AG04449 (cell line): ENCODE measurements at regions of chr2 and their contacts with region 1.

Region 1: DNA sequence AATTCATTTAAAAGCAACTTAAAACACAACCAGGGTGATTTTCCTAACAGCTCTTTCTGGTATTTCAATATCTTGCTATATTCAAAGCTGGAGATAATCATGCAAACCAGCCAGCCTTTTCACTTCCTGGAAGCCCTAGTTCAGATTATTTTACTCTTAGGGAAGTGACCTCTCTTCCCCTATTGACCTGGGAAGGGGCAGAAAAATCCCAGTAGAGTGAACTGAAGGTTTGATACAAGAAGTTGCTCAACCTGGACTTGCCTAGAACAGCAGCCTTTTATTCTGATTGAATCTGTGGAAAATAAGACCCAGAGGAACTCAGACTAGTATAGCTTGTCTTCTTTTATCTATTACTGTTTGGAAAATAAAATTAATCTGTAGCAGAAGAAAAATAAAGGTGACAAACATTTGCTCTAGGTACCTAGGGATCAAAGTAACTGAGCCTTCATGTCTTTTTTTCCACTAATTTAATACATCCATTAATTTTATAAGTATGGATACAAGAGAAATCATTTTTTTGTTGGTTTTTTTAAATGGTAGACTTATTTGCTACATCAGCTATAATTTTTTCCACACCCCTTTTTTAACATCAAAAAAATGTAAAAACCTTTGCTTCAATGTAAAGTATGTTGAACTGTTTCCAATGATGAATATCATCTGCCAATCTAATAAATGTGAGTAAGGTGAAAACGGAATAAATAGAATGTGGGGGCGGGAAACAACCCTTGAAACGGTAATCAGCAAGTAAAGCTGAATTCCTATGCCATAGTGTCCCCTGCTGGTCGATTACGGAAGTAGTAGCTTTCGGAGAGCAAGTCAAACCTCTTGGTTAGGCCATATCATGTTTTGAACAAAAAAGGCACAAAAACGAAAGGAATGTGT is 629.9 kb downstream of the NRXN1 start:
- DNase-seq: peak; percentile 7
- H3K4me3 ChIP-seq: no peak overlapping the region
- CTCF ChIP-seq: peak; percentile 74

Region 2: GRCh38 chr2:48600204-48600813 is 1801.7 kb before region 1 on chr2:
- CTCF ChIA-PET with region 1: interaction called, 15 read pairs
- POLR2A ChIA-PET with region 1: no interaction called
- DNase-seq: no peak
- H3K4me3 ChIP-seq: no peak overlapping the region
- CTCF ChIP-seq: peak; percentile 58

Region 3: DNA sequence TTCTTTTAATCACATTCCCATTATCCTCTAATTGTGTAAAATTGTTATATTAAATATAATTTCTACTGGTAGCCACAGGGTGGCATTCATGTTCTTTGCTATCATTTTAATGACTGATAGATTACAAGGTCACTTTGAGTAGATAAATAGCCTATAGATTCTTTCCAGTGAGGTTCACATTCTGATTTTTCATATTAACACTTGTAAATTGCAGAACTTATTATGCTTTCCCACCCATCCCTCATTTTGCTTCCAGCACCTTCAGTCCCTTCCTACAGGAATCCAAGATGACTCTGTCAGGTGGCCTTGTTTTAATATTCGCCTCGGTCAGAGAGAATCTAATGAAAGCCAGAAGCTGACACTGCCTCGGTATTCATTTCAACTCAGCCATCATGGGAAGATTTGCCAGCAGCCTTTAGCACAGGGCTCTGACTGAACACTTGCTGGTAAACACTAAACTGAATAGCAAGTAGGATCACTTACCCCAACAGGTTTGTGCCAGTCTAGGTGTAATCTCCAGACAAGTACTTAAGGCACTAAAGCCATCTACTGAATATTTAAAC is 1146.5 kb before region 1 on chr2:
- CTCF ChIA-PET with region 1: interaction called, 13 read pairs
- POLR2A ChIA-PET with region 1: no interaction called
- DNase-seq: no peak
- H3K4me3 ChIP-seq: no peak overlapping the region
- CTCF ChIP-seq: no peak

Region 4: DNA sequence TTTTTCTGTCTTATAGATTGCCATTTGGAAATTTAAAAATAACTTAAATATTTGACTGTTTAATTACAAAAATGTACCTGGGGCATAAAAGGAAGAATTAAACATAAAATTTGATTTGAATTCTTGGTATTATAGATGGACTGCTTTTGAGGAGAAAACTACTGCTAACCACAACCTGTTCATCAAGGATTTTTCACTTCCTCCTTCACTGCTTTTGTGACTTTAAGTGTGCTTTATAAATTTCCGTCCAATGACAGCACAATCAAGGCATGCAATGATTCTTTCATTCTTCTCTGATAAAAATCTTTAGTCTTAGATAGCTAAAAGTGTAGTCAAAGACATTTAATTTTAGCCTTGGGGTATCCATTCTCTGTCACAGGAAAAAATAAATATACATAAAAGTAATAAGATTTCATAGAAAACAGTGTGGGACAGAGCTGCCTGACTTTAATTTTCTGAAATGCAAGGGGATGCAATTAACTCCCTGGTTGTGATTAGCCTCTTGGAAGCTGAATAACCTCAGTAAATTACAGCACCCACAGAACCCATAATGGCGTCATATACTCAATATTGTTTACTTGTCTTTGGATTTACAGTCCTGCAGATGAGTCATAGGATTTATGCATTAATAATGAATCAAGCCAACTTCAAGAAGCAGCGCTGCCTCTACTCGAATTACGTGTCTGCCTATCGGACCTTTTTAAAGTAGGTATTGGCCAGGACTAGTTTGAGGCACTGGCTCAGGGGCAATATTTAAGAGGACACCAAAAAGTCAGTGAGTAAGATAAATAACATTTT is 42.1 kb after region 1 on chr2:
- CTCF ChIA-PET with region 1: no interaction called
- POLR2A ChIA-PET with region 1: no interaction called
- DNase-seq: no peak
- H3K4me3 ChIP-seq: no peak overlapping the region
- CTCF ChIP-seq: no peak